ENCODE measurements at regions of chr6 and their contacts with region 1.

Region 1: DNA sequence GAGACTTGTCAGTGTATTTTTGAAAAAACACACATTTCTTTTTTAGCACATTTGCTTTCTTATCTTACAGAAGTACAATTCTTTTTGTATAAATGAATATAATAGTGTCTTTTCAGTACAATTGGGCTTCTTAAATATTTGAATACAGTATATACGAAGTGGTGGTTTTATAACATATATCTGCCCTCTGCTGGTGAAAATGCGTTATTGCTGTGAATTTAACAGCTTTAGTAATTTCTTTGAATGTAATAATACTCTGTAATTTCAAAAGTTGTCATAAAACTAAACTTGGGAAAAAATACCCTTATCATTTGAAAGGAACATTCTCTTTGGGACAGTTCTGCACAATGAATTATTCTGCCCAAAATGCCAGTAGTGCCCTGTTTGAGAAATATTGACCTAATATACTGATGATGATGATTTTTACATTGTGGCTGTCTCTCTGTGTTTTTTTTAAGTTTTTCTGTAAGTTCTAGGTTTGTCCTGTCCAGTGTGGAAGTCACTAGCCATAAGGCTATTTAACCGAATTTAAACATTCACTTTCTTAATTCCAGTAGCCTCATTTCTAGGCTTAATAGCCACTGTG is 19.0 kb downstream of the SMAP1 start:
- DNase-seq: peak in 2 of 5 donors; percentile 6 to 25
- H3K4me3 ChIP-seq: no peak overlapping the region
- H3K4me3 Mint-ChIP-seq: no peak overlapping the region
- H3K27ac ChIP-seq: no peak overlapping the region
- H3K27ac Mint-ChIP-seq: no peak overlapping the region
- H3K4me1 ChIP-seq: peaks cover 13% of the 10 kb centered on the region
- H3K4me1 Mint-ChIP-seq: peaks cover 53 to 81% (median 71%) of the 10 kb centered on the region in 3 donors
- H3K27me3 ChIP-seq: no peaks in the 10 kb centered on the region
- H3K27me3 Mint-ChIP-seq: no peaks in the 10 kb centered on the region

Region 2: GRCh38 chr6:70667711-70668498 is 18.7 kb before region 1 on chr6 and contains the start of gene SMAP1:
- CTCF ChIA-PET with region 1: interaction called, 10 read pairs
- POLR2A ChIA-PET with region 1: no interaction called
- DNase-seq: peak; percentile 89 to 93 (median 90)
- H3K4me3 ChIP-seq: peak within 1 kb of the TSS; percentile 58
- H3K4me3 Mint-ChIP-seq: peak within 1 kb of the TSS; percentile 81 to 95 (median 89)
- H3K27ac ChIP-seq: peak within 1 kb of the TSS; percentile 69
- H3K27ac Mint-ChIP-seq: peak within 1 kb of the TSS; percentile 85 to 98 (median 92)
- H3K4me1 ChIP-seq: peaks cover 32% of the 10 kb centered on the region
- H3K4me1 Mint-ChIP-seq: peaks cover 52 to 57% (median 53%) of the 10 kb centered on the region in 3 donors
- H3K27me3 ChIP-seq: no peaks in the 10 kb centered on the region
- H3K27me3 Mint-ChIP-seq: no peaks in the 10 kb centered on the region
- total RNA-seq, gene SMAP1: 20.1 to 23.8 TPM

Region 3: DNA sequence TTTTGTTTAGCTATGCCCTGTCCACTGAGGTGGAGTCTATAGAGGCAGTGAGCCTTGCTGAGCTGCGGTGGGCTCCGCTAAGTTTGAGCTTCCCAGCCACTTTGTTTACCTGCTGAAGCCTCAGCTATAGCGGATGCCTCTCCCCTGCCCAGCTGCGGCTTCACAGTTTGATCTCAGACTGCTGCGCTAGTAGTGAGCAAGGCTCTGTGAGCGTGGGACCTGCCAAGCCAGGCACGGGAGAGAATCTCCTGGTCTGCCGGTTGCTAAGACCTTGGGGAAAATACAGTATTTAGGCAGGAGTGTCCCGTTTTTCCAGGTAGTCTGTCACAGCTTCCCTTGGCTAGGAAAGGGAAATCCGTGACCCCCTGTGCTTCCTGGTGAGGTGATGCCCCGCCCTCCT is 119.4 kb after region 1 on chr6:
- CTCF ChIA-PET with region 1: no interaction called
- POLR2A ChIA-PET with region 1: no interaction called
- DNase-seq: no peak
- H3K4me3 ChIP-seq: no peak overlapping the region
- H3K4me3 Mint-ChIP-seq: no peak overlapping the region
- H3K27ac ChIP-seq: no peak overlapping the region
- H3K27ac Mint-ChIP-seq: no peak overlapping the region
- H3K4me1 ChIP-seq: no peaks in the 10 kb centered on the region
- H3K4me1 Mint-ChIP-seq: peaks cover 22 to 37% (median 28%) of the 10 kb centered on the region in 3 donors
- H3K27me3 ChIP-seq: no peaks in the 10 kb centered on the region
- H3K27me3 Mint-ChIP-seq: no peaks in the 10 kb centered on the region